Gastrocnemius medialis (tissue), 4 donors: ENCODE measurements at regions of chr3 and their contacts with region 1.

Region 1: DNA sequence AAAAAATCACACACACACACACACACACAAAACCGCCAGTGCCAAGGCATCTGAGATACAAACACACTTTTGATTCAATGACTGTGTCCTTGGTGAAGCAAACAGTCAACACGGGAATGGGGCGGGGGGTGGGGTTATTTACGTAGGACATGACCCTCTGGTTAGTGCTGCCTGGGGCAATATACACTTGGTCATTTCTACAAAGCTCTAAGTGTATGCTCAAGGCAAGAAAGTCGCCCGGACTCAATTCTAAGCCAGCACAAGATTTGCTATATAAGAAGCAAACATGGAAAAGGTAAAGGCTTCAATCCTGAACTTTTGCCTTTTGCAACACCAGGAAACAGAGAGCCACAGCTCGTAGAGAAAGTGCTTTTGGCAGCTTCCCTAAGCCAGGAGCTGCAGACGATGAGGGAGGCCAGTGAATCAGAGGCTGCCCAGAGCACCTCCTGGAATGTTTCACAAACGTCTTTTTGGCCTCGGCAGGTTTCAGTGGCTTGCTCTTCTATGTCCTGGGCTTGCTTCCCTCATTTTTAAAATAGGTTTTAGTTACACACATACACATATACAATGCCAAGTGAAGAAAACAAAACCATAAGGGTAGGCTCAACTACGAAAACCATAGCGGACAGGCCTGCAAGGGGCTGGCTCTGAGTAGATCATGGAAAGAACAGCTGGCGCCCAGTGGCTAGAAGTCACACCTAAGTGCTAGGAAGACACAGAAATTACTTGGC is 73.6 kb downstream of the TM4SF4 start:
- DNase-seq: peak; percentile 14 to 43
- ATAC-seq: peak; percentile 62 to 80
- H3K4me3 ChIP-seq: no peak overlapping the region
- H3K27ac ChIP-seq: peak overlapping the region; percentile 14 to 60 (median 44)
- H3K4me1 ChIP-seq: peaks cover 25 to 35% of the 10 kb centered on the region in 2 donors
- H3K27me3 ChIP-seq: no peaks in the 10 kb centered on the region
- CTCF ChIP-seq: no peak
- POLR2A ChIP-seq: no peak

Region 2: GRCh38 chr3:149638228-149639092 is 90.4 kb after region 1 on chr3:
- in situ Hi-C with region 1: loop called in 1 of 4 experiments (anchors 25 kb)
- intact Hi-C with region 1: no loop called
- DNase-seq: no peak
- ATAC-seq: no peak
- H3K4me3 ChIP-seq: peak overlapping the region; percentile 11 to 34 (median 28)
- H3K27ac ChIP-seq: peak overlapping the region in 3 of 4 donors; percentile 26 to 41 (median 34)
- H3K4me1 ChIP-seq: peaks cover 29 to 45% of the 10 kb centered on the region in 2 donors
- H3K27me3 ChIP-seq: no peaks in the 10 kb centered on the region
- CTCF ChIP-seq: no peak
- POLR2A ChIP-seq: no peak

Region 3: DNA sequence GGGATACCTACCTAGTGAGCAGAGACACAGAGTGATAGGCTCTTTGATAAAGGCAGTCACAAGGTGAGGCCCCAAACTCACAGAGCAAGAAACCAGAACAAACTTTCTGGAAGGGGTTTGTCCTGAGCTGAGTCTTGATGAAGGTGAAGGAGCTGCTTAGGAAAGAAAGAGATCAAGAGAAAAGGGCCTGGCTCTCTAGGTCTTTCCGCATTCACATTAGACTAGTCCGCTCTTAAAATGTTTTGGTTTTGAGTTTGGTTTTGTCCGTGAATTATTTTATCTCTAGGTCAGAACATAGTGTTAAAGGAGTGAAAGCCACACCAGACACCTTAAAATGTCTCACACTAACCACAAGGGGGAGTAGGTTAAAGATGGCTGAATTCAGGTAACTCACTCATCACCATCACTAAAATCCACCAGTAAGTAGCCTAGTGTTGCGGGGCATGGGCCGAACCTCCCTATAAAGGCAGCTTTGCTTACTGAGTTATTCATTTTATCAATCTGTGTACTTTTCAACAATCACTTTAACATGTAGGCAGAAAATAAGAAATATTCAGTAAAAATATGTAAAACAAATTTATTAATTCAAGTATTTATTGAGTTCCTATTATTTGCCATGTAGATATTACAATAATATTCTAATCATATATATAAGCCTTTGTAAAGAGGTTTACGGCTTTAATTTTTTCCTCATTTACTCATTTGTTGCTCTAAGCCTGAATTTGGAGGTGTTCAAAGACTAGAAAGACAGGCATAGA is 738.5 kb after region 1 on chr3:
- in situ Hi-C with region 1: no loop called
- intact Hi-C with region 1: no loop called
- DNase-seq: no peak
- ATAC-seq: peak; percentile 80 to 87
- H3K4me3 ChIP-seq: no peak overlapping the region
- H3K27ac ChIP-seq: no peak overlapping the region
- H3K4me1 ChIP-seq: no peaks in the 10 kb centered on the region
- H3K27me3 ChIP-seq: no peaks in the 10 kb centered on the region
- CTCF ChIP-seq: peak; percentile 25 to 62 (median 48)
- POLR2A ChIP-seq: no peak